Activated T-helper 1 cell treated with anti-CD3 and anti-CD28 coated beads, Interleukin-12 subunit alpha, Interleukin-12 subunit beta, Interleukin-2, Interleukin-4 antibody, amounts not matched to agents 30 ng/mL and 10 ng/mL and 1 ng/mL, durations not matched to agents 14 hours and 24 hours and 36 hours (primary cell): ENCODE measurements at regions of chr10 and their contacts with region 1.

Region 1: GRCh38 chr10:101214446-101215396 is 14.5 kb downstream of the LBX1 start:
- DNase-seq: peak; percentile 49
- H3K4me3 Mint-ChIP-seq: no peak overlapping the region
- H3K27ac Mint-ChIP-seq: peak overlapping the region; percentile 76
- H3K4me1 Mint-ChIP-seq: peaks cover 18% of the 10 kb centered on the region
- H3K27me3 Mint-ChIP-seq: peaks cover 63% of the 10 kb centered on the region

Region 2: GRCh38 chr10:101130984-101131961 is 83.4 kb before region 1 on chr10 and contains the start of gene TLX1:
- intact Hi-C with region 1: loop called (anchors 1 kb)
- DNase-seq: no peak
- H3K4me3 Mint-ChIP-seq: no peak within 1 kb of the TSS
- H3K27ac Mint-ChIP-seq: no peak within 1 kb of the TSS
- H3K4me1 Mint-ChIP-seq: peaks cover 8% of the 10 kb centered on the region
- H3K27me3 Mint-ChIP-seq: peaks cover 87% of the 10 kb centered on the region
- total RNA-seq, gene TLX1: not detected in 2 replicates

Region 3: GRCh38 chr10:101195921-101196320 is 18.8 kb before region 1 on chr10:
- intact Hi-C with region 1: no loop called
- DNase-seq: no peak
- H3K4me3 Mint-ChIP-seq: no peak overlapping the region
- H3K27ac Mint-ChIP-seq: no peak overlapping the region
- H3K4me1 Mint-ChIP-seq: no peaks in the 10 kb centered on the region
- H3K27me3 Mint-ChIP-seq: peaks cover 15% of the 10 kb centered on the region

Region 4: GRCh38 chr10:101291331-101292193 is 76.8 kb after region 1 on chr10:
- intact Hi-C with region 1: loop called (anchors 1 kb)
- DNase-seq: no peak
- H3K4me3 Mint-ChIP-seq: peak overlapping the region; percentile 73
- H3K27ac Mint-ChIP-seq: no peak overlapping the region
- H3K4me1 Mint-ChIP-seq: no peaks in the 10 kb centered on the region
- H3K27me3 Mint-ChIP-seq: peaks cover 76% of the 10 kb centered on the region

Region 5: DNA sequence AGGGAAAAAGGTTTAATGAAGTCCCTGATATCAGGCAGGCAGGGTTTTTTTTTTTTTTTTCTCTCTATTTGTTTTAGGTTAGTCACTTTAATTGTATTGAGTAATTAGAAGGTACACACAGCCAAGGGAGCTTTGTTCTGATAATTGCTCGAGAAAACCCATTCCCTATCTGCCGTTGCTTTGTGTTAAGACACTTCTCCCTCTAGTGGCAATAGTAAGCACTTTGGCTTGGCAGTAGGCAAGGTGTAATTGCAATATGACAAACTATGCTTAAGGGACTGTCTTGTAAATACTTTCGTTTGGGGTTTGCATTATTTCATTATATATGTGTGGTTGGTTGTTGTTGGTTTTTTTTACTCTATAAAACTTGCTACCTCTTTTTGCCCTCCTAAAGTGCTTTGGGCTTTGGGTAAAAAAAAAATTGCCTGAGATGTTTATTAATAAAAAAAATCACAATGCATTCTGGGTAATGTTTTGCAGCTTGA is 252.6 kb after region 1 on chr10:
- intact Hi-C with region 1: loop called (anchors 1 kb)
- DNase-seq: peak; percentile 19
- H3K4me3 Mint-ChIP-seq: no peak overlapping the region
- H3K27ac Mint-ChIP-seq: no peak overlapping the region
- H3K4me1 Mint-ChIP-seq: peaks cover 10% of the 10 kb centered on the region
- H3K27me3 Mint-ChIP-seq: no peaks in the 10 kb centered on the region

Region 6: GRCh38 chr10:101782811-101783735 is 568.4 kb after region 1 on chr10 and contains the start of gene NPM3:
- intact Hi-C with region 1: loop called (anchors 2 kb)
- DNase-seq: peak; percentile 78
- H3K4me3 Mint-ChIP-seq: peak within 1 kb of the TSS; percentile 100
- H3K27ac Mint-ChIP-seq: peak within 1 kb of the TSS; percentile 99
- H3K4me1 Mint-ChIP-seq: peaks cover 59% of the 10 kb centered on the region
- H3K27me3 Mint-ChIP-seq: peaks cover 5% of the 10 kb centered on the region
- total RNA-seq, gene NPM3: 149 and 151 TPM in 2 replicates